Breast epithelium (tissue), 4 donors: ENCODE measurements at regions of chr5 and their contacts with region 1.

Region 1: DNA sequence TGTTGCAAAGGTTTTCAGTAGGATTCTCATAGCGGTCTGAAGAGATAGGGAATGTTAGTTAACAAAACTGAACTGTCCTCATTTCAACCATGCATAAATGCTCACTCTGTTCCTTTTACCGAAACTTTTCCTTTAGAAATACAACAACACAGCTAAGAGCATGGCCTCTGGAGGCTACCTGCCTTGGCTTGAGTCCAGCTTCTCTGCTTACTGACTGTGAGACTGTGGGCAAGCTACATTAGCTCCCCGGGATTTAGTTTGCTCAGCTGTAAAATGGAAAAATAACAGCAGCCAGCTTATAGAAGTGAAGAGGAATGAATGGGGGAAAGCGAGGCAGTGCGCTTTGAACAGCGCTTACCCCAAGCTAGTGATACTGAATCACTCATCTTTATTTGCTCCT is 507.9 kb upstream of the DAP start:
- DNase-seq: no peak
- H3K4me3 ChIP-seq: no peak overlapping the region
- H3K27ac ChIP-seq: no peak overlapping the region
- H3K4me1 ChIP-seq: no peaks in the 10 kb centered on the region
- H3K27me3 ChIP-seq: no peaks in the 10 kb centered on the region
- CTCF ChIP-seq: no peak
- POLR2A ChIP-seq: no peak

Region 2: DNA sequence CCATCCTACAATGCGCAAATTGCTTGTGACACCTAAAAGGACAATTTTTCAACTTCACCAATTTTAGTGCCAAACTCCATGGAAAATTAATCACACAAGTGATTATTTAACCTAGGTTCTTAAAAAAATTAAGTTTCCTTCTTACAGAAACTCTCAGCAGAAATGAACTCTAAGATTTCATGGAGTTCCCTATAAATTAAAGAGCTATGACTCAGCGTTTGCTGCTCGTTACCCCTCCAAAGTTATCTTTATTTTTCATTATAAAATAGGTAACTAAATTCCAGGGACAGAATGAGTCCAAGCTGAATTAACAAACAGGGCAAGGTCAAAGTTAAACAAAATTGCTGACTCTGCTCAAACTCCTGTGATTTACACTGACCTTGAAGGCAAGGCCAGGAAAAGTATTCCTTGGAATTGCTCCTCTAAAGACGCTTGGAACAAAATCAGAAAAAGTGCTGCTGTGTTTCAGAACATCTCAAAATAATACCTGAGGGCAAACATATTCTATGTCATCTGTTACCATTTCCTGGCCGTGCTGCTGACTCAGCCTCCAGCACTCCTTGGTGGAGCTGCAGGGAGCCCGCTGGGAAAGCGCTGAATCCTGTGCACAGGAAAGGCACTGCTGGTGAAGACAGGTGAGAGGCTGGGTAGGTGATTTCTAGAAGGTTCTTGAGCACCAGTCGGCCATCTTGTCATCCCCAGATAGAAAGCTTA is 958.7 kb before region 1 on chr5:
- intact Hi-C with region 1: loop called (anchors 10 kb)
- DNase-seq: peak in 1 of 2 donors; percentile 63
- H3K4me3 ChIP-seq: no peak overlapping the region
- H3K27ac ChIP-seq: no peak overlapping the region
- H3K4me1 ChIP-seq: no peaks in the 10 kb centered on the region
- H3K27me3 ChIP-seq: no peaks in the 10 kb centered on the region
- CTCF ChIP-seq: no peak
- POLR2A ChIP-seq: no peak